Activated CD4-positive, alpha-beta T cell treated with anti-CD3 and anti-CD28 coated beads for 36 hours (primary cell): ENCODE measurements at regions of chr11 and their contacts with region 1.

Region 1: DNA sequence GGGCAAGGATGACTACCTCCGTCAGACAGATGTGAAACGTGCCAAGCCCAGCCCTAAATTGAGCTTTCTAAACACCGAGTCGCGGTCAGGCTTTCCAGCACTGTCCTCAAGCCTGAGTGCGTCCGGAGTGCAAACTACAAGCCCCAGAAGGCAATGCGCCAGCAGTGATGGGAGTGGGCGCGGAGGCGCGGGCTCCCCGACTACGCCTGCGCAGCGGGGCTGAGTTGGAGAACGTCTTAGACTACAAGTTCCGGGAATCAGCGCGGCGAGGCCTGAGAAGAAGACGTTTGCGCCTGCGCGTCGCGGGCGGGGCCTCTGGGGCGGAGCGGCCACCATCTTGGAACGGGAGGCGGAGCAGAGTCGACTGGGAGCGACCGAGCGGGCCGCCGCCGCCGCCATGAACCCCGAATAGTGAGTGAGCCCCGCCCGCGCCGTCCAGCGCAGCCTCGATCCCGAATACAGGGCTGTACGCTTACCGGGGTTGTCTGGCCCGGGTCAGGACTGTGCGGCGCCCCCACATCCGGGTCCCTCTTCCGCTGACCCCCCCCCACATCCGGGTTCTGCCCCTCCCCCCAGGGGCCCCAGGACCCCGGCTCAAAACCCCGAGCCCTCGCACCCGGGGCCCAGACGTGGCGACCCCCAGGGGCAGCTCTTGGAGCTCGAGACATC is at the start of gene RAB1B:
- DNase-seq: peak; percentile 100
- ATAC-seq: peak; percentile 88
- H3K4me3 Mint-ChIP-seq: peak within 1 kb of the TSS; percentile 100
- H3K27ac Mint-ChIP-seq: peak within 1 kb of the TSS; percentile 97
- H3K4me1 Mint-ChIP-seq: peaks cover 28% of the 10 kb centered on the region
- H3K27me3 Mint-ChIP-seq: no peaks in the 10 kb centered on the region
- total RNA-seq, gene RAB1B: 114 to 147 TPM

Region 2: DNA sequence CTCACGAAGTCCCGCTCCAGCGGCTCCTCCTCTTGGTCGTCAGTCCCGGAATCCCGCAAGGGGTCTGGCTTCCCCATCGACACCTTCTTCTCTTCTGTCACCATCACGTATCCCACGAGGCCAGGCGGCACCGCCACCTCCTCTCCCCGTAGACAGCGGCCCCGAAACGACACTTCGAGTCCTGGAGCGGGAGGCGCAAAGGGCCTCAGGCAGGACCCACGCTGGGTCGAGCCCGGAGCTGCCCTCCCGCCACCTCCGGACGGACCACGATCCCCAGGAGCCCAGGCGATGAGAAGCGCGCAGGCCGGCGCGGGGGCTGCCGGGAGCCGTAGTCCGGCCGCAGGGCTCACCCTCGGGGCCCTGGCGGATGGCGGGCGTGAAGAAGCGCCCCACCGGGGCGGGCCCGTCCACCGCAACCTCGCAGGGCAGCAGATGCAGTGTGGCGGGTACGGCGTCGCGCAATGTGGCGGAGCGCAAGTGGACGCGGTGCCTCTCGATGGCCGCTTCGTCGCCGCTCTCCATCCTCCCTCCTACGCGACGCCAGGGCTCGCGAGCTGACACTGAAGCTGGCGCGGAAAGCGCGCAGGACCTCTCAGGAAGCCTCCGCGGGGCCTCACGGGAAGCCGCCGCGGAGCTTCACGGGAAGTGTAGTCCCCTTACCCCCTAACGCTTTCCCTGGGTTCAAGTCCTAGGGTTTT is 548.0 kb before region 1 on chr11 and contains the start of gene RNASEH2C:
- CTCF ChIA-PET with region 1: no interaction called
- POLR2A ChIA-PET with region 1: no interaction called
- intact Hi-C with region 1: loop called in 1 of 2 experiments (anchors 5 kb)
- DNase-seq: peak; percentile 92
- ATAC-seq: peak; percentile 94
- H3K4me3 Mint-ChIP-seq: peak within 1 kb of the TSS; percentile 84
- H3K27ac Mint-ChIP-seq: peak within 1 kb of the TSS; percentile 88
- H3K4me1 Mint-ChIP-seq: peaks cover 23% of the 10 kb centered on the region
- H3K27me3 Mint-ChIP-seq: no peaks in the 10 kb centered on the region
- total RNA-seq, gene RNASEH2C: 72.5 to 96.8 TPM

Region 3: GRCh38 chr11:66183494-66184048 is 84.8 kb before region 1 on chr11:
- CTCF ChIA-PET with region 1: no interaction called
- POLR2A ChIA-PET with region 1: no interaction called
- intact Hi-C with region 1: no loop called
- DNase-seq: no peak
- ATAC-seq: peak; percentile 16
- H3K4me3 Mint-ChIP-seq: no peak overlapping the region
- H3K27ac Mint-ChIP-seq: no peak overlapping the region
- H3K4me1 Mint-ChIP-seq: peaks cover 46% of the 10 kb centered on the region
- H3K27me3 Mint-ChIP-seq: no peaks in the 10 kb centered on the region

Region 4: GRCh38 chr11:66282468-66283386 is 14.3 kb after region 1 on chr11:
- CTCF ChIA-PET with region 1: interaction called, 26 read pairs
- POLR2A ChIA-PET with region 1: interaction called, 3 read pairs
- intact Hi-C with region 1: loop called (anchors 1 kb)
- DNase-seq: peak; percentile 100
- ATAC-seq: peak; percentile 93
- H3K4me3 Mint-ChIP-seq: peak overlapping the region; percentile 40
- H3K27ac Mint-ChIP-seq: no peak overlapping the region
- H3K4me1 Mint-ChIP-seq: peaks cover 29% of the 10 kb centered on the region
- H3K27me3 Mint-ChIP-seq: no peaks in the 10 kb centered on the region